Spleen (tissue), 13 donors: ENCODE measurements at regions of chr6 and their contacts with region 1.

Region 1: GRCh38 chr6:12605888-12606345 is 110.7 kb upstream of the PHACTR1 start:
- DNase-seq: no peak
- H3K4me3 ChIP-seq: peak overlapping the region in 1 of 8 donors; percentile 57
- H3K27ac ChIP-seq: peak overlapping the region in 1 of 8 donors; percentile 31
- H3K4me1 ChIP-seq: peaks cover 0 to 45% (median 19%) of the 10 kb centered on the region in 6 donors
- H3K27me3 ChIP-seq: no peaks in the 10 kb centered on the region
- CTCF ChIP-seq: peak in 10 of 11 experiments; percentile 45 to 82 (median 68)
- POLR2A ChIP-seq: no peak

Region 2: GRCh38 chr6:11585426-11586016 is 1020.4 kb before region 1 on chr6:
- intact Hi-C with region 1: loop called (anchors 10 kb)
- DNase-seq: no peak
- H3K4me3 ChIP-seq: no peak overlapping the region
- H3K27ac ChIP-seq: no peak overlapping the region
- H3K4me1 ChIP-seq: peaks cover 0 to 32% (median 5%) of the 10 kb centered on the region in 6 donors
- H3K27me3 ChIP-seq: no peaks in the 10 kb centered on the region
- CTCF ChIP-seq: peak in 10 of 11 experiments; percentile 10 to 76 (median 59)
- POLR2A ChIP-seq: no peak

Region 3: DNA sequence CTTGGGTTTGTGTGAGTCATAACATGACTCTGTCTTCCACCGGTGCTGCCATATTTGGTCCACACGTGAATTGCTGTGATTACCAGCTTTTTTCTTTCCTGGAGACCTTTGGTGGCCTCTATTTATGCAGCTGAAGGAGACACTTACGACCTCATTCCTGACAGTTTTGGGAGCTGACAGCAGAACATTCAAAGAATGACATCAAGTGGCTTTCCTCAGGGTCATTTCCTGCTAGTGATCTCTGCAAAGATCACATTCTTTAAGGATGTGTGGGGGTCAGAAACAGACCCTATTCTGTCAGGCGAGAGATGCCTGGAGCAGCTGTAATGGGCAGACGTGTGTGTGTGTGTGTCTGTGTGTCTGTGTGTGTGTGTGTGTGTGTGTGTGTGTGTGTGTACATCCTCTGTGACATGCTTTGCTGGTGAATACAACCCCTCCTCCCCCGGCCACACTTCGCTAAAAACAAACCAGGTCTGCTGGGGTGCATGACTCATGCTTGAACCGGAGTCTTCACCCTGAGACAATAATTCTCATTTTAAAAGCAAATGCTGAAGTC is 952.8 kb before region 1 on chr6:
- intact Hi-C with region 1: loop called (anchors 2 kb)
- DNase-seq: no peak
- H3K4me3 ChIP-seq: no peak overlapping the region
- H3K27ac ChIP-seq: peak overlapping the region in 3 of 8 donors; percentile 17 to 41 (median 23)
- H3K4me1 ChIP-seq: peaks cover 0 to 55% (median 24%) of the 10 kb centered on the region in 6 donors
- H3K27me3 ChIP-seq: peaks cover 0 to 16% (median 0%) of the 10 kb centered on the region in 7 donors
- CTCF ChIP-seq: no peak
- POLR2A ChIP-seq: no peak

Region 4: DNA sequence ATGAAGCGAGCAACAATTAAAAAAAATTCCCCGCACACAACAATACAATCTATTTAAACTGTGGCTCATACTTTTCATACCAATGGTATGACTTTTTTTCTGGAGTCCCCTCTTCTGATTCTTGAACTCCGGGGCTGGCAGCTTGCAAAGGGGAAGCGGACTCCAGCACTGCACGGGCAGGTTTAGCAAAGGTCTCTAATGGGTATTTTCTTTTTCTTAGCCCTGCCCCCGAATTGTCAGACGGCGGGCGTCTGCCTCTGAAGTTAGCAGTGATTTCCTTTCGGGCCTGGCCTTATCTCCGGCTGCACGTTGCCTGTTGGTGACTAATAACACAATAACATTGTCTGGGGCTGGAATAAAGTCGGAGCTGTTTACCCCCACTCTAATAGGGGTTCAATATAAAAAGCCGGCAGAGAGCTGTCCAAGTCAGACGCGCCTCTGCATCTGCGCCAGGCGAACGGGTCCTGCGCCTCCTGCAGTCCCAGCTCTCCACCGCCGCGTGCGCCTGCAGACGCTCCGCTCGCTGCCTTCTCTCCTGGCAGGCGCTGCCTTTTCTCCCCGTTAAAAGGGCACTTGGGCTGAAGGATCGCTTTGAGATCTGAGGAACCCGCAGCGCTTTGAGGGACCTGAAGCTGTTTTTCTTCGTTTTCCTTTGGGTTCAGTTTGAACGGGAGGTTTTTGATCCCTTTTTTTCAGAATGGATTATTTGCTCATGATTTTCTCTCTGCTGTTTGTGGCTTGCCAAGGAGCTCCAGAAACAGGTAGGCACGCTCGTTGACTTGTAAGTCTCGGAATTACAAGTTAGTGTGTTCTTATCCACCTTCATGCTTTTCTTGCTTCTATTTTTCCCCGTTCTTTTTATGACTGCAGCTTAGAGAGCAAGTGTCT is 315.7 kb before region 1 on chr6 and contains the start of gene EDN1:
- intact Hi-C with region 1: loop called (anchors 2 kb)
- DNase-seq: peak; percentile 92
- H3K4me3 ChIP-seq: peak within 1 kb of the TSS; percentile 43 to 75 (median 46)
- H3K27ac ChIP-seq: peak within 1 kb of the TSS; percentile 9 to 77 (median 71)
- H3K4me1 ChIP-seq: peaks cover 3 to 57% (median 25%) of the 10 kb centered on the region in 6 donors
- H3K27me3 ChIP-seq: peaks cover 0 to 35% (median 15%) of the 10 kb centered on the region in 7 donors
- CTCF ChIP-seq: peak in 9 of 11 experiments; percentile 4 to 65 (median 48)
- POLR2A ChIP-seq: peak in 1 of 3 donors; percentile 36
- total RNA-seq, gene EDN1: 5.5 to 27.1 (median 15.1) TPM

Region 5: GRCh38 chr6:12656906-12657305 is 51.0 kb after region 1 on chr6:
- intact Hi-C with region 1: no loop called
- DNase-seq: no peak
- H3K4me3 ChIP-seq: no peak overlapping the region
- H3K27ac ChIP-seq: no peak overlapping the region
- H3K4me1 ChIP-seq: no peaks in the 10 kb centered on the region
- H3K27me3 ChIP-seq: peaks cover 0 to 15% (median 0%) of the 10 kb centered on the region in 7 donors
- CTCF ChIP-seq: no peak
- POLR2A ChIP-seq: no peak